ENCODE measurements at regions of chr16 and their contacts with region 1.

Region 1: DNA sequence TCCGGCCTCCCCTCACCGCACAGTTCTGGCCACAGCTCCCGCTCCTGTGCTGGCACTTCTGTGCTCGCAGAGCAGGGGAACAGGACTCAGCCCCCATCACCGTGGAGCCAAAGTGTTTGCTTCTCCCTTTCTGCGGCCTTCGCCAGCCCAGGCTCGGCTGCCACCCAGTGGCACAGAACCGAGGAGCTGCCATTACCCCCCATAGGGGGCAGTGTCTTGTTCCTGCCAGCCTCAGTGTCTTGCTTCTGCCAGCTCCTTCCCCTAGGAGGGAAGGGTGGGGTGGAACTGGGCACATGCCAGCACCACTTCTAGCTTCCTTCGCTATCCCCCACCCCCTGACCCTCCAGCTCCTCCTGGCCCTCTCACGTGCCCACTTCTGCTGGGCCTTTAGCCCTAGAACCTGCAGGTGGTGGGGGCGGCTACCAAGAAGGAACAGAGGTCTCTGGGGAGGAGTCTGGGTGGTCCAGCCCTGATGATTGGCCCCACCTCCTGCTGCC is 645 bp upstream of the ELMO3 start:
- DNase-seq: peak; percentile 43 to 74
- H3K4me3 ChIP-seq: peak overlapping the region; percentile 89; the same call in 1 of the 2 replicates
- H3K27ac ChIP-seq: peak overlapping the region; percentile 75
- H3K4me1 ChIP-seq: peaks cover 49% of the 10 kb centered on the region
- H3K27me3 ChIP-seq: no peaks in the 10 kb centered on the region
- CTCF ChIP-seq: peak; percentile 78

Region 2: DNA sequence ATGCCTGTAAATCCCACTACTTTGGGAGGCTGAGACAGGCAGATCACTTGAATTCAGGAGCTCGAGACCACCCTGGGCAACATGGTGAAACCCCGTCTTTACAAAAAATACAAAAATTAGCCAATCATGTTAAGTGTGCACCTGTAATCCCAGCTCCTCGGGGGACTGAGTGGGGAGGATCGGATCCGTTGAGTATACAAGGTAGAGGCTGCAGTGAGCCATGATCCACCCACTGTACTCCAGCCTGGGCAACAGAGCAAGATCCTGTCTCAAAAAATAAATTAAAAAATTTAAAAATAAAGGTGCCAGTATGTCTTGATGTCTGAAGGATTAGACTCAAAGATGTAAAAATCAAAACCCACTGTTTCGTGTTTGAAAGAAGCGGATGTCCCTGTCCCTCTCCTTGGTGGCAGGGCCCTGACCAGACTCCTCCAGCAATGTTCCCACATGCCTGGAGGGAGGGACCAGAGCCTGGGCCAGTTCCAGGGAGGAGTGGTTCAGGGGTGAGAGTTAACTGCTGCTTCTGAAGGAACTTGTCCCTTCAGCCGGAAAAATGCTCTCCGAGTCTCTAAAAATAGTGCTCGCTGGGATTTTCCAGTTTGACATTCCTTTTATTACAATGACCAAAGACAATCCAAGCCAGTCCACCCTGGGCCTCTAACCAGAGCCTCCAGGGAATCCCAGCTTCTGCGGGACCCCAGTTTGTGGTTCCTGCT is 492.3 kb before region 1 on chr16:
- CTCF ChIA-PET with region 1: no interaction called
- POLR2A ChIA-PET with region 1: no interaction called
- intact Hi-C with region 1: no loop called
- DNase-seq: no peak
- H3K4me3 ChIP-seq: no peak overlapping the region
- H3K27ac ChIP-seq: no peak overlapping the region
- H3K4me1 ChIP-seq: no peaks in the 10 kb centered on the region
- H3K27me3 ChIP-seq: no peaks in the 10 kb centered on the region
- CTCF ChIP-seq: no peak

Region 3: DNA sequence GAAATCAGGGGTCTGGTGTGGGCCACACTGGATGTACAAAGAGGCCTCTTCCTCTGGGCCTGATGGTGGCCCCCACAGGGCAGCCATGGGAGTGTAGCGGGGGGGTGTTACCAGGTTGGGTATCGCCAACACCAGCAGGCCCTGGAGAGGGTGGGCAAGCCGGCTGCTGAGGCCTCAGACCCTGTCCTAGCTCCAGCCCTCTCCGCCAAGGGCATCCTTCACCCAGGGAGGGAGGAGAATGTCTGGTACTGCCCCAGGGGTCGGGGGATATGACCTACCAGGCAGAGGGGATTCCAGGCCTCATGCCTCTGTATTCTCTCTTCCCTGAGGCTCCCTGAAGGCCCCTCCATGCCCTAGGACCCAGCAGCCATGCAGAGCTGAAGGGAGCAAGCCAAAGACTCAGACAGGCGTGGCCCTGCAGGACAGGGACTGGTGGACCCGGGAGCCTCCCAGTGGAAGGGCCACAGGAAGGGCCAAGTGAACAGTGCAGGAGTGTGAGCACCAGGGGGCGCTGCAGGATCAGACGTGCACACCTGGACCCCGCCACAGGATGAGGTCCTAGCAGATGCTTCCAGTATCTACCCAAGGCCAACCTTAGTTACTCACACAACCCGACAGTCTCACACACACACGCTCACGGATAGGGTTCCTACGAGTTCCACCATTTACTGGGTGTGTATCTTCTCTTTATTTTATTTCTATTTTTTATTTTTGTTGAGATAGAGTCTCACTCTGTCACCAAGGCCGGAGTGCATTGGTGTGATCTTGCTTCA is 220.8 kb before region 1 on chr16:
- CTCF ChIA-PET with region 1: no interaction called
- POLR2A ChIA-PET with region 1: no interaction called
- intact Hi-C with region 1: loop called (anchors 1 kb)
- DNase-seq: peak; percentile 62 to 82
- H3K4me3 ChIP-seq: no peak overlapping the region
- H3K27ac ChIP-seq: no peak overlapping the region
- H3K4me1 ChIP-seq: no peaks in the 10 kb centered on the region
- H3K27me3 ChIP-seq: no peaks in the 10 kb centered on the region
- CTCF ChIP-seq: peak; percentile 96

Region 4: DNA sequence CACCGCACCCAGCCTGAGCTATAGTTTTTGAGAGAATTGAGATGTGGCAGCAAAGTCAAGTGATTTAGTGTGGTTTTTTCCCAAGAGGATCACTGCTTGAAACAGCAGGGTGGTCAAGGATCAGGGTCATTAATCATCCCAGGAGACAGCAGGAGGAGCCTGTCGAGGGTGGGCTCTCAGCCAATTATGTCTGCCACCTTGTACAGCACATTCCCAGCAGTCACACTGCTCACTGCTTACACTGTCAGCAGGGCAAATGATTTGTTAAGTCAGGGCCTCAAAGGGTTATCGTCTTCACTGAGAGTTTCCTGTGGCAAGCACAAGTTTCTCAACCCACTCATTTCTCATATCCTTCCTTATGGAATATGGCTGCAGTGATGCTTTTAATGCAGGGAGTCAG is 60.7 kb before region 1 on chr16:
- CTCF ChIA-PET with region 1: interaction called, 10 read pairs
- POLR2A ChIA-PET with region 1: no interaction called
- intact Hi-C with region 1: no loop called
- DNase-seq: no peak
- H3K4me3 ChIP-seq: no peak overlapping the region
- H3K27ac ChIP-seq: no peak overlapping the region
- H3K4me1 ChIP-seq: no peaks in the 10 kb centered on the region
- H3K27me3 ChIP-seq: no peaks in the 10 kb centered on the region
- CTCF ChIP-seq: no peak

Region 5: DNA sequence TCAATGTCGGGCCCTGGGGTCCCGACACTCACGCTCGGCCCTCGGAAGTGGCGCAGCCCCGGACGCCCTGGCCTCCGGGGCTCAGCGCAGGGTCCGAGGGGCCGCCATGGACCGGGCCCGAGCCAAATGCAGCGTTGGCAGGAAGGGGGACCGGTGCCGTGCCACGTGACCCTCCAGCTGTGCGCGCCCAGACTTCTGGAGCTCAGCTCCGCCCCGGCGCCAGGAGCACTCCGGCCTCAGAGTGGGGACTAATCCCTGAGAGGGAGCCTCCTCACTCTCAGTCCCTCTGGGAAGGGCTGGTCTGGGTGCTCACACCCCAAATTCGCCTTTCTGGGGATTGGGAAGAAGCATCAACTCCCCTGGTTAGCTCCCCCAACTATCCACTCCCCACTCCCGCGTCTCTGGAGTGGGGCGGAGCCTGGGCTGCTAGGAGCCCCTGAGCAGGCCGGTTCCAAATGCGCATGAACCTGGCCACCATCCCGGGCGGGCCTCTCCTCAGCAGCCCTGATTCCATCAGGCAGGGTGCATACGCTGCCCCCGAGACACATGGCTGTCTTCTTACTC is 47.4 kb before region 1 on chr16 and contains the start of gene B3GNT9:
- CTCF ChIA-PET with region 1: no interaction called
- POLR2A ChIA-PET with region 1: no interaction called
- intact Hi-C with region 1: loop called (anchors 2 kb)
- DNase-seq: peak in 1 of 2 experiments; percentile 55
- H3K4me3 ChIP-seq: peak within 1 kb of the TSS; percentile 57; the same call in 1 of the 2 replicates
- H3K27ac ChIP-seq: no peak within 1 kb of the TSS
- H3K4me1 ChIP-seq: no peaks in the 10 kb centered on the region
- H3K27me3 ChIP-seq: no peaks in the 10 kb centered on the region
- CTCF ChIP-seq: no peak
- total RNA-seq, gene B3GNT9: 4.0 and 4.2 TPM in 2 replicates

Region 6: GRCh38 chr16:67246934-67247697 is 48.8 kb after region 1 on chr16 and contains the start of gene FHOD1:
- CTCF ChIA-PET with region 1: interaction called, 9 read pairs
- POLR2A ChIA-PET with region 1: interaction called, 11 read pairs
- intact Hi-C with region 1: loop called (anchors 1 kb)
- DNase-seq: peak; percentile 84 to 98
- H3K4me3 ChIP-seq: peak within 1 kb of the TSS; percentile 90
- H3K27ac ChIP-seq: peak within 1 kb of the TSS; percentile 76
- H3K4me1 ChIP-seq: peaks cover 45% of the 10 kb centered on the region
- H3K27me3 ChIP-seq: no peaks in the 10 kb centered on the region; the same call in 1 of the 2 replicates
- CTCF ChIP-seq: 0 out of 2 replicates have a peak, but pooled peaks have one; percentile 39
- total RNA-seq, gene FHOD1: 58.2 and 60.0 TPM in 2 replicates

Region 7: GRCh38 chr16:67441271-67441753 is 243.0 kb after region 1 on chr16:
- CTCF ChIA-PET with region 1: no interaction called
- POLR2A ChIA-PET with region 1: interaction called, 19 read pairs
- intact Hi-C with region 1: no loop called
- DNase-seq: peak; percentile 8 to 70
- H3K4me3 ChIP-seq: no peak overlapping the region
- H3K27ac ChIP-seq: no peak overlapping the region
- H3K4me1 ChIP-seq: no peaks in the 10 kb centered on the region
- H3K27me3 ChIP-seq: no peaks in the 10 kb centered on the region
- CTCF ChIP-seq: no peak

Measured in PC-9 (cell line).